Heart left ventricle (tissue), 16 donors: ENCODE measurements at regions of chr1 and their contacts with region 1.

Region 1: GRCh38 chr1:199009447-199009846 is 370.6 kb downstream of the PTPRC start:
- DNase-seq: no peak
- ATAC-seq: peak in 3 of 4 donors; percentile 49 to 59 (median 56)
- H3K4me3 ChIP-seq: peak overlapping the region in 1 of 12 donors; percentile 11
- H3K27ac ChIP-seq: peak overlapping the region in 2 of 12 donors; percentile 26 to 32
- H3K4me1 ChIP-seq: peaks cover 0 to 23% (median 11%) of the 10 kb centered on the region in 12 donors
- H3K27me3 ChIP-seq: no peaks in the 10 kb centered on the region
- CTCF ChIP-seq: no peak
- POLR2A ChIP-seq: no peak

Region 2: DNA sequence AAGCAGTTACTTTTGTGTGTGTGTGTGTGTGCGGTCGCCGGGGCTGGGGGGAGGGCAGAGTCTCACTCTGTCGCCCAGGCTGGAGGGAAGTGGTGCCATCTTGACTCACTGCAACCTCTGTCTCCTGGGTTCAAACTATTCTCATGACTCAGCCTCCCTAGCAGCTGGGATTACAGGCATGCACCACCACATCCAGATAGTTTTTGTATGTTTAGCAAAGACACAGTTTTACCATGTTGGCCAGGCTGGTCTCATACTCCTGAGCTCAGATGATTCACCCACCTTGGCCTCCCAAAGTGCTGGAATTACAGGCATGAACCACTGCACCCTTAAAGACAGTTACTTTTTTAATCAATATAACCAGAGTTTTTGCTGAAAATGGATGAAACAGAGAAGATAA is 163.6 kb before region 1 on chr1:
- intact Hi-C with region 1: loop called in 1 of 10 experiments (anchors 10 kb)
- DNase-seq: no peak
- ATAC-seq: no peak
- H3K4me3 ChIP-seq: no peak overlapping the region
- H3K27ac ChIP-seq: no peak overlapping the region
- H3K4me1 ChIP-seq: no peaks in the 10 kb centered on the region
- H3K27me3 ChIP-seq: no peaks in the 10 kb centered on the region
- CTCF ChIP-seq: no peak
- POLR2A ChIP-seq: no peak

Region 3: GRCh38 chr1:199041173-199041914 is 31.9 kb after region 1 on chr1:
- intact Hi-C with region 1: loop called in 1 of 10 experiments (anchors 1 kb)
- DNase-seq: no peak
- ATAC-seq: no peak
- H3K4me3 ChIP-seq: no peak overlapping the region
- H3K27ac ChIP-seq: no peak overlapping the region
- H3K4me1 ChIP-seq: peaks cover 0 to 22% (median 0%) of the 10 kb centered on the region in 12 donors
- H3K27me3 ChIP-seq: no peaks in the 10 kb centered on the region
- CTCF ChIP-seq: no peak
- POLR2A ChIP-seq: no peak